Esophagus muscularis mucosa (tissue), 4 donors: ENCODE measurements at regions of chr13 and their contacts with region 1.

Region 1: GRCh38 chr13:32581177-32581786 is 5.0 kb upstream of the PDS5B start:
- DNase-seq: no peak
- H3K4me3 ChIP-seq: no peak overlapping the region
- H3K27ac ChIP-seq: no peak overlapping the region
- H3K4me1 ChIP-seq: peaks cover 5 to 7% (median 6%) of the 10 kb centered on the region in 4 donors
- H3K27me3 ChIP-seq: no peaks in the 10 kb centered on the region
- CTCF ChIP-seq: peak; percentile 50 to 65 (median 53)
- EP300 ChIP-seq: no peak
- POLR2A ChIP-seq: no peak

Region 2: GRCh38 chr13:31909864-31910551 is 671.3 kb before region 1 on chr13:
- intact Hi-C with region 1: loop called (anchors 5 kb)
- DNase-seq: no peak
- H3K4me3 ChIP-seq: no peak overlapping the region
- H3K27ac ChIP-seq: no peak overlapping the region
- H3K4me1 ChIP-seq: peaks cover 4 to 24% (median 18%) of the 10 kb centered on the region in 4 donors
- H3K27me3 ChIP-seq: no peaks in the 10 kb centered on the region
- CTCF ChIP-seq: peak; percentile 83 to 87 (median 84)
- EP300 ChIP-seq: no peak
- POLR2A ChIP-seq: no peak

Region 3: DNA sequence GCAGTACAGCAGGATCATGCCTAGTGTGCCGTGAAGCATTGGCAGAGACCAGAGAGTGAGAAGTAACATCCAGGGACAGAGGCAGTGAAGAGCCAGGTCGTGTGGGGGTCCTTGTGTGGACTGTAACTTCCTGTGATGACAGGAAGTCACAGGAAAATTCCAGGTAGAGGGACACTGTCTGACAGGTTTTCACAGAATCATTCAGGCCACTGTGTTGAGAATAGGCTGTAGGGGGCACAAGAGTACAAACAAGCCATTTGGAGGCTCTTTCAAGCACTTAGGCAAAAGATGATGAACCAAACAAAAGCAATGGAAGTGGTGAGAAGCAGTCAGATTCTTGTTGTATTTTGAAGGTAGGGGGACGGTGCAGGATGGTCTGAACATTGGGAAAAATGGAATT is 199.7 kb before region 1 on chr13:
- intact Hi-C with region 1: loop called (anchors 10 kb)
- DNase-seq: no peak
- H3K4me3 ChIP-seq: no peak overlapping the region
- H3K27ac ChIP-seq: no peak overlapping the region
- H3K4me1 ChIP-seq: no peaks in the 10 kb centered on the region
- H3K27me3 ChIP-seq: no peaks in the 10 kb centered on the region
- CTCF ChIP-seq: peak; percentile 29 to 44 (median 34)
- EP300 ChIP-seq: no peak
- POLR2A ChIP-seq: no peak

Region 4: DNA sequence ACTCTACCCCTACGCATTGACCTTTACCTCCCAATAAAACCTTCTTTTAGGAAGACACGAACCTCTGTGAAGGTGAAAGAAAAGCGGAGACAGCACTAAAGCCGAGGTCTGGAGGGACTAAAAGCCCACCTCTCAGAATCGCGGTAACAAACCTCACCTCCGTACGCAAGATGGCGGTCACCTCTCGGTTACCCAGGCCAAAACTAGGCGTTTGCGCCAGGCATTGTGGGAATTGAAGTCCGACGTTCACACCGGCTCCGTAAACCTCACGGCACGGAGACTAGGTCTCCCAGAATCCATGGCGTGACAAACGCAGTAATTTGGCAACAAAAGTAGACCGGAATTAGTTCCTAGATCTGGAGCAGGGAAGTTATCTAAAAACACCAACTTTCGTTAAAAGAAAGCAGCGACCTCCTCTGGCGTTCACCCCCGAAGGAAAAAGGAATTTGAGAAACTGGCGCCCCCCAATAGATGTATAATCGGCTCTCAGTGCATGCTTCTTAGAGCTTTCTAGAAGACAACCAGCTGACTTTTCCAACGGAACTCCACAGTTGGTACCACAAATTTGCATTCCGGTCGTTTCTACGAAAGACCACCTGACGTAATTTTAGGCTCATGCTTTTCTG is 42.5 kb before region 1 on chr13 and contains the start of gene N4BP2L2:
- intact Hi-C with region 1: loop called (anchors 5 kb)
- DNase-seq: peak; percentile 99
- H3K4me3 ChIP-seq: peak within 1 kb of the TSS; percentile 72 to 84 (median 82)
- H3K27ac ChIP-seq: peak within 1 kb of the TSS; percentile 89 to 96 (median 92)
- H3K4me1 ChIP-seq: peaks cover 38 to 44% (median 42%) of the 10 kb centered on the region in 4 donors
- H3K27me3 ChIP-seq: no peaks in the 10 kb centered on the region
- CTCF ChIP-seq: peak; percentile 28 to 39 (median 32)
- EP300 ChIP-seq: no peak
- POLR2A ChIP-seq: no peak
- total RNA-seq, gene N4BP2L2: 81.2 to 198 (median 106) TPM

Region 5: GRCh38 chr13:32627793-32628192 is 46.5 kb after region 1 on chr13:
- intact Hi-C with region 1: no loop called
- DNase-seq: no peak
- H3K4me3 ChIP-seq: no peak overlapping the region
- H3K27ac ChIP-seq: no peak overlapping the region
- H3K4me1 ChIP-seq: peaks cover 18 to 55% (median 53%) of the 10 kb centered on the region in 4 donors
- H3K27me3 ChIP-seq: no peaks in the 10 kb centered on the region
- CTCF ChIP-seq: no peak
- EP300 ChIP-seq: no peak
- POLR2A ChIP-seq: no peak